ENCODE measurements at regions of chr2 and their contacts with region 1.

Region 1: DNA sequence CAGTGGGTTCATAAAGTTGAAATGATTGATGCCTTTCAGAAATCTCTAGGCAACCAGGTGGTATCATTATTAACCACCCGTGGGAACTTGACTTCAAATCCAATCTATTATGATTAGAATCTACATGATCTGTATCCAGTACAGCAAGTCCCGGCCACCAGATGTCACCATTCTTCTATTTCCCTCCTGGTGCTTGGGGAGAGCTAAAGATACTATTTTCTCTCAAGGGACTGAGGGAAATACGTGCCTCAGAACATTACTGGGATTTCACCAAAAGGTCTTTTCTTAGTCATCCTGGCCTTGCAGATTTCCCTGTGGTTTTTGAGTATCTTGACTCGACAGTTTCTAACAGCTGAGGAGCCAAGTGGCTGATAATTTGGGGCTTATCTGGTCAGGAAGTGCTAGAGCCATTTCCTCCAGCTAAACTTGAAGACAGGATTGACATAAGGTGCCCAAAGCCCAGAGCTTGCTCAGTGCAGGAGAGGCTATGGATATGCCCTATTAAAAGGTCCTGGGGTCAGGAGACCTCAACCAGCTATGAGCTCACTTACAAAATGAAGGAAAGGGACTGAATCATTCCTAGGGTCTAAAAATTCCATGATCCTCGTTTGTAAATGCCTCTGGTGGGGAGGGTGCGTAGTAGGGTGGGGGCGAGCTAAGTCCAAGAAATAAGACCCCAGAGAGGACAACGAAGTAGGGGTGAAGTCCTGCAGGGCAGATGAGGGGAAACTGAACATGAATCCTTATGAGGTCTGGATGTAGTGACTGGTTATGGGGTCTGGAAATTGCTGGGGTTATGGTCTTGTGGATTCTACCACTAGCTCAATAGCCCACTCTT is 135.4 kb upstream of the MGAT5 start:
- DNase-seq: peak; percentile 68 to 98 (median 92)

Region 2: GRCh38 chr2:134245340-134245984 is 127.0 kb after region 1 on chr2:
- intact Hi-C with region 1: loop called (anchors 5 kb)
- DNase-seq: peak; percentile 40 to 95 (median 86)

Region 3: GRCh38 chr2:134411828-134412638 is 293.5 kb after region 1 on chr2:
- intact Hi-C with region 1: loop called (anchors 2 kb)
- DNase-seq: peak; percentile 65 to 96 (median 89)

Region 4: GRCh38 chr2:134918526-134919340 is 800.2 kb after region 1 on chr2 and contains the start of gene CCNT2:
- intact Hi-C with region 1: loop called (anchors 5 kb)
- DNase-seq: peak; percentile 96 to 100 (median 99)

Measured in head of caudate nucleus (tissue), 42 donors.